ENCODE measurements at regions of chr1 and their contacts with region 1.

Region 1: DNA sequence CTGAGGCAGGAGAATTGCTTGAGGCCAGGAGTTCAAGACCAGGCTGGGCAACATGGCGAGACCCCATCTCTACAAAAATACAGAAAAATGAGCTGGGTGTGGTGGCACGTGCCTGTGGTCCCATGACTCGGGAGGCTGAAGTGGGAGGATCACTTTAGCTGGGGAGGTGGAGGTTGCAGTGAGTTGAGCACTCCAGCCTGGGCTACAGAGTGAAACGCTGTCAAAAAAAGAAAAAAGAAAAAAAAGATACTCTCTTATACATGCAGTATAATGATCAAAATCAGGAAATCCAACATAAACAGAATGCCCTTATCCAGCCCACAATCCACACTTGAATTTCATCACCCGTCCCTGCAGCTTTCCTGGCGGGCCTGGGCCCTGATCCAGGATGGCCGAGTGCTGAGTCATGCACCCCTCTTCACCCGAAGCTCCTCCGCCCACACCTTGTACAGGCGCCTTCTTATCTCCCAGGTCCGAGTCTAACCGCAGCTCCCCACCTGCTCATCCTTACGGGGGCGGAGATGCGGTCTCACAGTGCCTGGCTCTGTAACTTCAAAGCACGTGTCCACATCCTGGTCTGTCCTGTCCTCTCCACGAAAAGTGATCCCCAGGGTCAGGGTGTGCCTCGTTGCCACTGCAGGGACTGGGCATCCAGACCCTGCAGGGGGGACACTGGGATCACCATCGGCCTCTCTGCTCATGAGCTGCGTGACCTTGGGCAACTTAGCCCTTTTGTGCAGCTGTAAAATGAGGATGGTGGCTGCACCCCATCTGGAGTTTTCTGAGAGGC is 120.2 kb upstream of the SLC45A1 start:
- DNase-seq: peak; percentile 85 to 93
- H3K4me3 ChIP-seq: no peak overlapping the region
- H3K27ac ChIP-seq: peak overlapping the region; percentile 99
- H3K4me1 ChIP-seq: peaks cover 89% of the 10 kb centered on the region
- H3K27me3 ChIP-seq: no peaks in the 10 kb centered on the region
- CTCF ChIP-seq: no peak

Region 2: GRCh38 chr1:7885513-7886404 is 311.9 kb before region 1 on chr1:
- CTCF ChIA-PET with region 1: no interaction called
- POLR2A ChIA-PET with region 1: no interaction called
- intact Hi-C with region 1: no loop called
- DNase-seq: peak in 1 of 2 experiments; percentile 98
- H3K4me3 ChIP-seq: no peak overlapping the region
- H3K27ac ChIP-seq: no peak overlapping the region
- H3K4me1 ChIP-seq: no peaks in the 10 kb centered on the region
- H3K27me3 ChIP-seq: no peaks in the 10 kb centered on the region
- CTCF ChIP-seq: no peak

Region 3: GRCh38 chr1:8015036-8015808 is 182.5 kb before region 1 on chr1:
- CTCF ChIA-PET with region 1: no interaction called
- POLR2A ChIA-PET with region 1: interaction called, 8 read pairs
- intact Hi-C with region 1: loop called (anchors 5 kb)
- DNase-seq: peak; percentile 58 to 72
- H3K4me3 ChIP-seq: peak overlapping the region; percentile 91; the same call in 1 of the 2 replicates
- H3K27ac ChIP-seq: peak overlapping the region; percentile 90
- H3K4me1 ChIP-seq: peaks cover 75% of the 10 kb centered on the region
- H3K27me3 ChIP-seq: no peaks in the 10 kb centered on the region
- CTCF ChIP-seq: peak; percentile 70

Region 4: DNA sequence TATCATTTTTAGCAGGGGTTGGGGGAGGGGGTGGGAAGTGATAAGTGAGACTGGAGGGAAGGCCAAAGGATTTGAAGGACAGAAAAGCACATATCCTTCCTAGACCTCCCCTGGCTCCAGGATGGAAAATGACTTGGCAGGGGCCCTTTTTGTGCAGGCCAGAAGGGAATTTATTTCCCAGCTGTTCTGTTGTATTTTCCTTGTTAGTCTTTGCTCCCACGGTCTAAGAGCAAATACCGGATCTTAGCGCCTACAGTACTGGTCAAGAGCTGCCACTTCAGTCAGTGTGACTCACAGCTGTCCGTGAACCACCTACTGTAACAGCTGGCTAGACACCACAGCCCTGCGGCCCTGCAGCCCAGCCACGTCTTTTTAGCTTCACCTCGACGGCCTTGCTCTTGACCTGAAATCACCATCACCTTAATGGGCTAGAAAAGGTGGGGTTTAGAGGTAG is 120.5 kb before region 1 on chr1:
- CTCF ChIA-PET with region 1: interaction called, 6 read pairs
- POLR2A ChIA-PET with region 1: interaction called, 9 read pairs
- intact Hi-C with region 1: loop called (anchors 1 kb)
- DNase-seq: peak; percentile 67 to 92
- H3K4me3 ChIP-seq: no peak overlapping the region
- H3K27ac ChIP-seq: peak overlapping the region; percentile 98
- H3K4me1 ChIP-seq: peaks cover 69% of the 10 kb centered on the region
- H3K27me3 ChIP-seq: no peaks in the 10 kb centered on the region
- CTCF ChIP-seq: no peak

Region 5: DNA sequence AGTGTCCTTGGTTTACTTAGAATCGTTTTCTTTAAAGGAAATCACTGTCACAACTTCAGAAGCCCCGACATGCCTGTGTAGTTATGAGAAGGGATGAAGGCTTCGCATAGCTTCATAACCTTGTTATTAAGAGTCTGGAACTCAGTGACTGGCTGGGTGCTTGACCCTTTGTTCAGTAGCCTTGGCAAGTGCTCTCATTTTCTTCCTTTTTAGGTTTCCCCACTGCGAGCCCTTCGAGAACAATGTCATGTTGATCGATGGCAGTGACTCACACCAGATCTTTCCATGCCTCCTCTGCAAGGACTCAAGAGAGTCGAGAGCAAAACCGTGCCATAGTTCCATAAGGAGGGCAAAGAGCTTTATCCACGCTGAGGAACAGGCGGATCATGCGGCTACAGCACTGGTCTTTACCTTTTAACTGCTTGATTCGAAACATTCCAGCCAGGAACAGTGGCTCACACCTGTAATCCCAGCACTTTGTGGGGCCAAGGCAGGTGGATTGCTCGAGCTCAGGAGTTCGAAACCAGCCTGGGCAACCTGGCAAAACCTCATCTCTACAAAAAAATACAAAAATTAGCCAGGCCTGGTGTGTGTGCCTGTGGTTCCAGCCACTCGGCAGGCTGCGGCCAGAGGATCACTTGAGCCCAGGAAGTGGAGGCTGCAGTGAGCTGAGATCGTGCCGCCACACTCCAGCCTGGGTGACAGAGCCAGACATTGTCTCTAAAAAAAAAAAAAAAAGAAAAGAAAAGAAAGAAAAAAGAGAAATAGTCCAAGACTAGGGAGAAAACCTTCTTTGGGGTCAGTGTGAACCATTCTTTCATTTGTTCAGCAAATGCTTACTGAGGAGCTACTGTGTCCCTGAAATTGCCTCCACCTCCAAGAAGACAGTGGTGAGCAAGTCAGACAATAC is 76.2 kb before region 1 on chr1:
- CTCF ChIA-PET with region 1: no interaction called
- POLR2A ChIA-PET with region 1: interaction called, 5 read pairs
- intact Hi-C with region 1: loop called (anchors 5 kb)
- DNase-seq: peak; percentile 63 to 96
- H3K4me3 ChIP-seq: peak overlapping the region; percentile 28; the same call in 1 of the 2 replicates
- H3K27ac ChIP-seq: peak overlapping the region; percentile 100
- H3K4me1 ChIP-seq: peaks cover 78% of the 10 kb centered on the region
- H3K27me3 ChIP-seq: no peaks in the 10 kb centered on the region
- CTCF ChIP-seq: no peak

Region 6: DNA sequence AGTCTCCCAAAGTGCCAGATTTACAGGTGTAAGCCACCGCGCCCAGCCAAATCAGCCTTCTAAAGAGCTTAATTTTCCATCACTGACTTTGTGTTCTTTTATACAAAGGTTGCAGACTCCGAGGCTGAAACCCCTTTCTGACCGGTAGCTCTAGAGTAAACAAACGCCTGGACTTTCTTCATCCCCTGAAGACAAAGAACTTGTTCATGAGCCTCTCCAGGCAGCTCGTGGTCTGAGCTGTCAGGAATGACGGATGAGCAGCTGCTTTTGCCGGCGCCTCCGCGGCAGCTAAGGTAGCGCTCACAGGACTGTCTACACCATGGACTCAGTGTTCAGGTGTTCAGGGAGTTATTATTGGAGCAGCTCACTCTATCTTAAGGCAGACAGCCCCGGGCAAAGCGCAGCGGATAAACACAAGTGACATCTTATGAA is 43.1 kb before region 1 on chr1:
- CTCF ChIA-PET with region 1: no interaction called
- POLR2A ChIA-PET with region 1: no interaction called
- intact Hi-C with region 1: loop called (anchors 5 kb)
- DNase-seq: peak; percentile 81 to 95
- H3K4me3 ChIP-seq: no peak overlapping the region
- H3K27ac ChIP-seq: peak overlapping the region; percentile 99
- H3K4me1 ChIP-seq: peaks cover 31% of the 10 kb centered on the region
- H3K27me3 ChIP-seq: no peaks in the 10 kb centered on the region
- CTCF ChIP-seq: no peak

Region 7: GRCh38 chr1:8182034-8182761 is 15.5 kb before region 1 on chr1:
- CTCF ChIA-PET with region 1: no interaction called
- POLR2A ChIA-PET with region 1: interaction called, 6 read pairs
- intact Hi-C with region 1: loop called (anchors 1 kb)
- DNase-seq: peak; percentile 64 to 98
- H3K4me3 ChIP-seq: peak overlapping the region; percentile 28; the same call in 1 of the 2 replicates
- H3K27ac ChIP-seq: peak overlapping the region; percentile 100
- H3K4me1 ChIP-seq: peaks cover 40% of the 10 kb centered on the region
- H3K27me3 ChIP-seq: no peaks in the 10 kb centered on the region
- CTCF ChIP-seq: no peak

Region 8: GRCh38 chr1:8238851-8239305 is 41.2 kb after region 1 on chr1:
- CTCF ChIA-PET with region 1: interaction called, 11 read pairs
- POLR2A ChIA-PET with region 1: interaction called, 4 read pairs
- intact Hi-C with region 1: loop called (anchors 1 kb)
- DNase-seq: peak; percentile 60 to 87
- H3K4me3 ChIP-seq: no peak overlapping the region
- H3K27ac ChIP-seq: peak overlapping the region; percentile 95
- H3K4me1 ChIP-seq: peaks cover 24% of the 10 kb centered on the region
- H3K27me3 ChIP-seq: no peaks in the 10 kb centered on the region
- CTCF ChIP-seq: no peak; the same call in 1 of the 2 replicates

Region 9: DNA sequence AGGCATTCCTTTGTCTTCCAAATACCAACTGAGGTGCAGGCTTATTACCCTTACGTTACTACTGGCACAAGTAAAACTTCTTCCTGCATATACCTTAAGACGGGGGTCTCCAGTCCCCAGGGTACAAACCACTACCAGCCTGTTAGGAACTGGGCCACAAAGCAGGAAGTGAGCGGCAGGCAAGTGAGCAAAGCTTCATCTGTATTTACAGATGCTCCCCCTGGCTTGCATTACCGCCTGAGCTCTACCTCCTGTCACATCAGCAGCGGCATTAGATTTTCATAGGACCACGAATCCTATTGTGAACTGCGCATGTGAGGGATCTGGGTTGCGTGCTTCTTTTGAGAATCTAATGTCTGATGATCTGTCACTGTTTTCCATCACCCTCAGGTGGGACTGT is 233.3 kb after region 1 on chr1:
- CTCF ChIA-PET with region 1: no interaction called
- POLR2A ChIA-PET with region 1: no interaction called
- intact Hi-C with region 1: no loop called
- DNase-seq: no peak
- H3K4me3 ChIP-seq: no peak overlapping the region
- H3K27ac ChIP-seq: no peak overlapping the region
- H3K4me1 ChIP-seq: no peaks in the 10 kb centered on the region
- H3K27me3 ChIP-seq: no peaks in the 10 kb centered on the region
- CTCF ChIP-seq: no peak

Measured in PC-9 (cell line).